Posterior vena cava (tissue), 2 donors: ENCODE measurements at regions of chr20 and their contacts with region 1.

Region 1: GRCh38 chr20:47272893-47273590 is 83.5 kb downstream of the ZMYND8 start:
- DNase-seq: no peak

Region 2: DNA sequence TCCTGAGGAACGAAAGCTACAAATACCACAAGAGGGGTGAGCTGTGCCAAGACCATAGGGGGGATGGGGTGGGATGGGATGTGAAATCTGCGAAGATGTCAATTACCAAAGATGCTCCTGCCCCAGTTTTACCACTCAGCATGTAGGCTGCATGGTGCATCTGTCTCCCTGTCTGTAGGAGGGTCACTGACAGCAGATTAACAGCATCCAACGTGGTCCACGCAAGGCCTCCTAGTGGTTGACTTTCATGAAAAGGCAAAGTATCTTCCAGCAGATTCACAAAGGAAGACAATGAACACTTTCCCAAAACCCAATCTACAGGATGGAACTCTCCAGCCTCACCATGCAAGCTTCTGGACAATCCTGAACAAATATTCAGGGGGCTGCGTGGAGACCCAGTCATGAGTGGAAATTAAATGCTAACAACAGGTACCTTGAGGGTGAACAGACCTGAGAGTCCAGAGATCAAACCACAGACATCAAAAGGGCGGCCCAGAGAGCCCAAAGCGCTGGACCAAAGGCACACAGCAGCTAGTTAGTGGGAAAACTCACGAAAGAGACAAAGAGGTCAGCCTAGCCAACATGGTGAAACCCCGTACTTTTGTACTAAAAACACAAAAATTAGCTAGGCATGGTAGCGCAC is 39.1 kb after region 1 on chr20:
- intact Hi-C with region 1: loop called in 1 of 2 experiments (anchors 5 kb)
- DNase-seq: peak; percentile 18

Region 3: GRCh38 chr20:47379433-47380150 is 106.5 kb after region 1 on chr20:
- intact Hi-C with region 1: loop called (anchors 5 kb)
- DNase-seq: no peak

Region 4: DNA sequence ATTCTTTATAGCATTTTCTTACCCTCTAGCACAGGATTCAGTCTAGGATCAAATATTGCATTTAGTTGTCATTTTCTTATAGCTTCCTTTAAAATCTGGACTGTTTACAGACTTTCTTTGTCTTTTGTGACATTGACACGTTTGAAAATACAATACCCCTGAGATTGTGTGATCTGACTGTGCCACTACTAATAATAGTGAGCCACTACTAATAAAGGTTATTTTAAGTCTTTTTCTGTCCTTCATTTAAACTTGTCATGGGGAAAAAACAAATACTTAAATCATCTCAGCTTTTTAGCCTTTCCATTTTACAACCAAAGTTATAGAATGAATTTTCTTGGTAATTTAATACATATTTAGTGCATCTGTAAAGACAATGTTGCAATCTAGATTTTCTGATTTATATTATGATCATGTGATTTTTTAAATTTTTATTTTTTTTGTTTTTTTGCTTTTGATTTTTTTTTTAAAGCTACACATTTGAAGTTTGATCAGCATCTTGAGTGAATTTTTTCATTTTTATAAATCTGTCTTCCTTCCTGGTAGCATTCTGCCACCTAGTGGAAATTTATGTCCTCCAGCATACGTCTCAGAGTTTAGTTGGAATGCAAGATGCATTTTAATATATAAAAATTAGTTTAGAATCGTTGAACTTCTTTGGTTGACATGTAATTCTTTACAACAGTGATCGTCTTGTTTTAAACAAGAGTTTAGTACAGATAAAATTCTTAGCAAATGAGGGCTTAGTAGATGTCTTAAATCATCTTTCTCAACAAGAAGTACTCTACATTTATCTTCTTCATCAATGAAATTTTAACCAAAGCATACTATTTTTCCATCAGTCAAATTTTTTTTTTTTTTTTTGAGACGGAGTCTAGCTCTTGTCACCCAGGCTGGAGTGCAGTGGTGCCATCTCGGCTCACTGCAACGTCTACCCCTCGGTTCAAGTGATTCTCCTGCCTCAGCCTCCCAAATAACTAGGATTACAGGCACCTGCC is 348.1 kb after region 1 on chr20:
- intact Hi-C with region 1: loop called in 1 of 2 experiments (anchors 10 kb)
- DNase-seq: no peak